ENCODE measurements at regions of chr10 and their contacts with region 1.

Region 1: GRCh38 chr10:114393482-114393881 is 10.8 kb downstream of the AFAP1L2 start:
- DNase-seq: no peak
- H3K4me3 ChIP-seq: no peak overlapping the region
- H3K27ac ChIP-seq: peak overlapping the region in 1 of 2 donors; percentile 21
- H3K4me1 ChIP-seq: peaks cover 28% of the 10 kb centered on the region
- H3K27me3 ChIP-seq: no peaks in the 10 kb centered on the region
- CTCF ChIP-seq: no peak
- EP300 ChIP-seq: no peak
- POLR2A ChIP-seq: no peak

Region 2: GRCh38 chr10:114349596-114350191 is 43.8 kb before region 1 on chr10:
- intact Hi-C with region 1: loop called in 1 of 4 experiments (anchors 5 kb)
- DNase-seq: peak; percentile 42 to 68 (median 49)
- H3K4me3 ChIP-seq: no peak overlapping the region
- H3K27ac ChIP-seq: peak overlapping the region in 1 of 2 donors; percentile 78
- H3K4me1 ChIP-seq: peaks cover 43% of the 10 kb centered on the region
- H3K27me3 ChIP-seq: no peaks in the 10 kb centered on the region
- CTCF ChIP-seq: no peak
- EP300 ChIP-seq: no peak
- POLR2A ChIP-seq: no peak